Gastrocnemius medialis (tissue), 4 donors: ENCODE measurements at regions of chr5 and their contacts with region 1.

Region 1: DNA sequence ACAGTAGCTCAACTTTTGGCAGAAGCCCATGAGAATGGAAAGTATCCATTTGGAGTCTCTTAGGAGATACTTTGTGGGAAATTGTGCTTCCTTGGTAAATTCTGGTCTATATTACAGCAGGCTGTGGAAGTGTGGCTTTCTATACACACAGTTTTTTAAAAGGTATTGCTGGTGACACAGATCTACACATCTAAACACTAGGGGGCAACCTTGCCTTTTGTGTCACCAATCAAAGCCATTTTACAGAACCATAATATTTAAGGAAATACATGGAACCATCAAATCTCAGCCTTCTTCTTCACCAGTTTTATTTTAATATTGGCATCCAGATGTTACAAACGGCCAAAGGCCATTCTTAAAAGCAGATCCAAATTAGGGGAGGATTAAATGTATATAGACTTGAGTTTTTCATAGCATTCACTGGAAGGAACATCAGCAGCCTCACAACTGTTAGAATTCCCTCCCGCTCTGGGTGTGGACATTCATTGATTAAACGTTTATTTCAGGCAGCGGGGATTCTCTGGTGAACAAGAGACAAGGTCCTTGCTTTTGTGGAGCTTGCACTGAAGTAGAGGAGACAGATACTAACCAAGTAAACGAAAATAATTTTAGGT is 132.4 kb upstream of the EPB41L4A start:
- DNase-seq: peak in 1 of 2 donors; percentile 26
- ATAC-seq: peak; percentile 61 to 73
- H3K4me3 ChIP-seq: no peak overlapping the region
- H3K27ac ChIP-seq: no peak overlapping the region
- H3K4me1 ChIP-seq: peaks cover 0 to 10% of the 10 kb centered on the region in 2 donors
- H3K27me3 ChIP-seq: no peaks in the 10 kb centered on the region
- CTCF ChIP-seq: peak; percentile 65 to 87 (median 72)
- POLR2A ChIP-seq: no peak

Region 2: DNA sequence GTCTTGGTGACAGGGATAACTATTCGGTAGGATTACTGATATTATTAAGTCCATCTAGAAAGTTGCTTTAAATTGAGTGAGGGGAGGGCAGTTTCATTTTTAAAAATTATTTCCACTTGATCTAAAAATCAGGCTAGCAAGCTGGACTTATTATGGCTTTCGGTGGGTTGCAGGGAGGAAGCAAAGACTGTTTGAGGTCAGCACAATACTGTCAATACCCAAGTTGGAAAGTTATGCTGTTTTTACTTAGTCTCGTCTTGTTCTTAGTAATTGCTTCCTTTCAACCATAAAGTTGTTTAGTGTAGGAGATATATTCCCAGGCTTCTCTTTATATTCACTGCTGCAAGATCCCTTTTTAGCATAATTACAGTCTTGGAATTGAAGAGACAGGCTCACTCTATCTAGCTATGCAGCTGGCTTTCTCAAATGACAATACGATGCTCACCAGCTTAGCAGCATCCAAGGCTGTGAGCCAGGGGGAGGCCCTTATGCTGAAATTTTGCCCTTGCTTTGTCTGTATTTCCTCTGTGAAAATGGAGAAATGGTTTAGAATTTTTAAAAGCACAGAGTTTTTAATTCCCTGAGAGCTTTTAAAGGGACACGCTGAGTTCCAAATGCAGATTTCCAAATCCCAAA is 117.9 kb after region 1 on chr5:
- in situ Hi-C with region 1: no loop called
- intact Hi-C with region 1: no loop called
- DNase-seq: no peak
- ATAC-seq: no peak
- H3K4me3 ChIP-seq: no peak overlapping the region
- H3K27ac ChIP-seq: no peak overlapping the region
- H3K4me1 ChIP-seq: no peaks in the 10 kb centered on the region
- H3K27me3 ChIP-seq: no peaks in the 10 kb centered on the region
- CTCF ChIP-seq: no peak
- POLR2A ChIP-seq: no peak

Region 3: DNA sequence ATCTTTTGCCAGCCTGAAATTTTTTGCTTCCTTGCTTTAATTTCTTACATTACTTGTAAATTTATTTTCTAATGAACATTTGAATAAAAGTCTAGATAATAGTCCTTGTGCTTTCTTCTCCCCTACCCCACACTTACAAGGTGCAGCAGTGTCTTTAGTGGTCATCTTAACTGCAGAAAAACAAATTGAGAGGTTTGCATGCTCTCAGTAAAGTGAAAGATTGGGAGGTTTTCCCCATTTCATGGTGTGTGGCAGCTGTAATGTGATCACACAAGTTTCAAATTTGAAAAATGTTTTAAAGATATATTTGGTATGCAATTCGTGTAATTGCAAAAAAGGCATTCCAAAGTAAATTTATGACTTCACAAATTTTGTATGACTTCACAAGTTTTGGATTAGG is 200.8 kb after region 1 on chr5:
- in situ Hi-C with region 1: loop called (anchors 5 kb)
- intact Hi-C with region 1: loop called (anchors 1 kb)
- DNase-seq: no peak
- ATAC-seq: no peak
- H3K4me3 ChIP-seq: no peak overlapping the region
- H3K27ac ChIP-seq: no peak overlapping the region
- H3K4me1 ChIP-seq: peaks cover 2 to 3% of the 10 kb centered on the region in 2 donors
- H3K27me3 ChIP-seq: no peaks in the 10 kb centered on the region
- CTCF ChIP-seq: no peak
- POLR2A ChIP-seq: no peak

Region 4: DNA sequence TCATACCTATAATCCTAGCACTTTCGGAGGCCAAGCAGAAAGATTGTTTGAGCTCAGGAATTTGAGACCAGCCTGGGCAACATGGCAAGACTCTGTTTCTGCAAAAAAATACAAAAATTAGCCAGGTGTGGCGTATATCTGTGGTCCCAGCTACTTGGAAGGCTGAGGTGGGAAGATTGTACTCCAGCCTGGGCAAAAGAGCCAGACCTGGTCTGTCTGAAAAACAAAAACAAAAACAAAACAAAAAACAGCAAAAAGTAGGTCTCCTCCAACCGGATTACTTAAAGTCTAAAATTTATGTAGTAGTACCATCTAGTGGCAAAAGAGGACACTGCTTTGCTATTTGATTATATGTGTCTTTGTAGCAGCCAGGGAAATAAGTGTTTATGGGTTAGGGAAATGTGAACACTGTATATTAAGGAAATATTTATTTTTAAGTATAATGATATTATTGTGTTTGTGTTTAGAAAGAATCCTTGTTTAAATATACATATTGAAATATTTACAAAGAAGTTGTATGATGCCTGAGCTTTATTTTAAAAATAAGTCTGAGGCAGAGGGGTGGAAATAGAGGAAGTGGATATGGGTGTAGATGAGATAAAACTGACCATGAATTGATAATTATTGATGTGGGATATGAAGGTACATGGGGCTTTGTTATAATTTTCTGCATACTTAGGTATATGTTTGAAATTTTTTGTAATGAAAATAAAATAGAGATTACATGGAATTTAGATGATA is 206.1 kb after region 1 on chr5:
- in situ Hi-C with region 1: loop called (anchors 5 kb)
- intact Hi-C with region 1: loop called (anchors 1 kb)
- DNase-seq: no peak
- ATAC-seq: peak; percentile 80 to 90
- H3K4me3 ChIP-seq: peak overlapping the region in 2 of 4 donors; percentile 8 to 22
- H3K27ac ChIP-seq: peak overlapping the region in 3 of 4 donors; percentile 16 to 39 (median 34)
- H3K4me1 ChIP-seq: peaks cover 0 to 5% of the 10 kb centered on the region in 2 donors
- H3K27me3 ChIP-seq: no peaks in the 10 kb centered on the region
- CTCF ChIP-seq: peak; percentile 64 to 92 (median 80)
- POLR2A ChIP-seq: no peak

Region 5: GRCh38 chr5:112930082-112930344 is 378.5 kb after region 1 on chr5:
- in situ Hi-C with region 1: loop called in 1 of 4 experiments (anchors 25 kb)
- intact Hi-C with region 1: no loop called
- DNase-seq: no peak
- ATAC-seq: no peak
- H3K4me3 ChIP-seq: no peak overlapping the region
- H3K27ac ChIP-seq: peak overlapping the region in 1 of 4 donors; percentile 60
- H3K4me1 ChIP-seq: peaks cover 0 to 11% of the 10 kb centered on the region in 2 donors
- H3K27me3 ChIP-seq: no peaks in the 10 kb centered on the region
- CTCF ChIP-seq: no peak
- POLR2A ChIP-seq: no peak